Activated T-helper 2 cell treated with anti-CD3 and anti-CD28 coated beads, Interferon-gamma antibody, Interleukin-2, Interleukin-4, amounts not matched to agents 10 μg/mL and 5 μg/mL and 100 μg/mL, durations not matched to agents 14 hours and 24 hours and 36 hours (primary cell): ENCODE measurements at regions of chr9 and their contacts with region 1.

Region 1: DNA sequence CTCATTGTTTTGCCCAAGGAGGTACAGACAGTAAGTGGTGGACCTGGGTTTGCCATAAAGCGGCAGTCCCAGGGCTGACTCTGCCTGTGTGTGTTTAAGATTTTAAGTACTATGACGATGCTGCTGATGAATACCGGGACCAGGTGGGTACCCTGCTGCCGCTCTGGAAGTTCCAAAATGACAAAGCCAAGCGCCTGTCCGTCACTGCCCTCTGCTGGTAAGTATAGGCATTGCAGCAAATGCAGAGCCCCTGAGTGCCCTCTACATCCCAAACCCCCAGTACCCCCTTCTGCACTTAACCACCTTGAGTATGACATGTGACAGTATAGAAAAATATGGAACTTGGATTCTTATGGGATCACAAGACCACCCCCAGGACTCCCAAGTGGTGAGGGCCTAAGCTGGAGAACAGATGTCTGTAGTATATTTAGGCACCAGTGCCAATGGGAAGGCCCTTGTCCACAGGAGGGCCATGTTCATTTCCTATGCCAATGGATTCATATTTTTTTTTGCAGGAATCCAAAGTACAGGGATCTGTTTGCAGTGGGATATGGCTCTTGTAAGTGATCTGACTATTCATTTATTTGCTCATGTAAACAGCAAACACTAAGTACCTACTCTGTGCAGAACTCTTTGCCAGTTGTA is 22.0 kb downstream of the ENHO start:
- DNase-seq: peak; percentile 60
- H3K4me3 Mint-ChIP-seq: no peak overlapping the region
- H3K27ac Mint-ChIP-seq: no peak overlapping the region
- H3K4me1 Mint-ChIP-seq: peaks cover 15% of the 10 kb centered on the region
- H3K27me3 Mint-ChIP-seq: no peaks in the 10 kb centered on the region

Region 2: GRCh38 chr9:34437006-34437925 is 63.5 kb before region 1 on chr9:
- intact Hi-C with region 1: loop called (anchors 1 kb)
- DNase-seq: peak; percentile 38
- H3K4me3 Mint-ChIP-seq: no peak overlapping the region
- H3K27ac Mint-ChIP-seq: no peak overlapping the region
- H3K4me1 Mint-ChIP-seq: no peaks in the 10 kb centered on the region
- H3K27me3 Mint-ChIP-seq: no peaks in the 10 kb centered on the region

Region 3: DNA sequence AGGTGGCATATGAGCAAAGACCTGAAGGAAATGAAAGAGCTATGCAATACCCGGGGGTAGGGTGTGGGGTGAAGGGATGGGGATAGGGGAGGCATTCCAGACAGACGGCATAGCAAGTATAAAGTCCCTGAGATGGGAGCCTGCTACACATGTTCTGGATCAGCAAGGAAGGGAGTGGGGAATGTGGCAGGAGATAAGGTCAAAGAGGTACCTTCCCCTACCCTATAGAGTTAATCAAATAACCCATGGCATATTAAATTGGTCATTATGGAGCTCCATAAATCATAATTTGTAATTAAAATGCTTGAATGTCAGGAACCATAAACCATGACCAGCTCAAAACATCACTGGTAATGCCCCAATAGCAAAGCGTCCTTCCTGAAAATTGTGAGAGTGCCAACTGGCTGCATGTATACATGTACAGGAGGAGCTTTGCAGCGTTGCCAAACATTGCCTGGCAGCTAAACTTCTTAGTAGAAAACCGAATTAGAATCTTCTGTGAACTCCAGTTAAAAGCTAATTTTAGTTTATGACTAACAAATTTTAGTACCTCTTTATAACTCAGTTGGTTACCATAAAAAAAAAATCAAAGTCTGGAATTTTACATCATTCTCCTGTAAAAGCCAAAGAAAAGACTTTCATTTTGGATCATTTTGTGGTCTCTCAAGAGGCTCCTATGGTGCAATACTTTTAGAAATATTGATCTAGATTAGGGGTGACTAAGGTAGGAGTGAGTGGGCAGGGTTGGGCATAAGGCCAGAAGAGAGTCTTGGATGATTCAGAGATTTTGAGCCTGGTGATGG is 37.4 kb before region 1 on chr9:
- intact Hi-C with region 1: loop called (anchors 2 kb)
- DNase-seq: no peak
- H3K4me3 Mint-ChIP-seq: no peak overlapping the region
- H3K27ac Mint-ChIP-seq: no peak overlapping the region
- H3K4me1 Mint-ChIP-seq: peaks cover 20% of the 10 kb centered on the region
- H3K27me3 Mint-ChIP-seq: peaks cover 23% of the 10 kb centered on the region

Region 4: DNA sequence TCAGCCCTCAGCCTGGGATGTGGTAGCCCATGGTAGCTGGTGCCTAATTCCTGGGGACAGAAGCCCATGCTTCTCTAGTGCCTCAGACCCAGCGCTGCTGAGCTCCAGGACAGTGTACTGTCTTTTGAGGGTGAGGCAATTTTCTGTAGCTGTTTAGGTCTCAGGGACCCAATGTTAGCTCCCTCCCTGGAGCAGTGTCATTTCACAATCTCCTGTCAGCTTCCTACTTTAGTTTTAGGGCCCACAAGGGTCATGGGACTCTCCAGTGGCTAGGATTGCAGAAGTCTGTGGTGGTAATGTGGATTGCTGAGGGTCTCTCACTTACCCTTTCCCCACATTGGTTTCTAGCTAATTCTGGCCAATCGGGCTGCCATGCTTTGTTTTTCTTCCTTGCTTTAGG is 276.9 kb after region 1 on chr9:
- intact Hi-C with region 1: no loop called
- DNase-seq: no peak
- H3K4me3 Mint-ChIP-seq: no peak overlapping the region
- H3K27ac Mint-ChIP-seq: no peak overlapping the region
- H3K4me1 Mint-ChIP-seq: no peaks in the 10 kb centered on the region
- H3K27me3 Mint-ChIP-seq: peaks cover 13% of the 10 kb centered on the region